Naive thymus-derived CD4-positive, alpha-beta T cell (primary cell): ENCODE measurements at regions of chr6 and their contacts with region 1.

Region 1: DNA sequence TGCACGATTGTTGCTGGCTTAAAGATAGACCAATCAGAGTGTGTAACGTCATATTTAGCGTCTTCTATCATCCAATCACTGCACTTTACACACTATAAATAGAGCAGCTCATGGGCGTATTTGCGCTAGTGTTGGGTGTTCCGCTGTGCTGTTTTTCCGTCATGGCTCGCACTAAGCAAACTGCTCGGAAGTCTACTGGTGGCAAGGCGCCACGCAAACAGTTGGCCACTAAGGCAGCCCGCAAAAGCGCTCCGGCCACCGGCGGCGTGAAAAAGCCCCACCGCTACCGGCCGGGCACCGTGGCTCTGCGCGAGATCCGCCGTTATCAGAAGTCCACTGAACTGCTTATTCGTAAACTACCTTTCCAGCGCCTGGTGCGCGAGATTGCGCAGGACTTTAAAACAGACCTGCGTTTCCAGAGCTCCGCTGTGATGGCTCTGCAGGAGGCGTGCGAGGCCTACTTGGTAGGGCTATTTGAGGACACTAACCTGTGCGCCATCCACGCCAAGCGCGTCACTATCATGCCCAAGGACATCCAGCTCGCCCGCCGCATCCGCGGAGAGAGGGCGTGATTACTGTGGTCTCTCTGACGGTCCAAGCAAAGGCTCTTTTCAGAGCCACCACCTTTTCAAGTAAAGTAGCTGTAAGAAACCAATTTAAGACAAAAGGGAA is 57.9 kb downstream of the TRIM38 start:
- DNase-seq: peak; percentile 68 to 94 (median 91)
- ATAC-seq: peak; percentile 66
- H3K4me3 ChIP-seq: peak overlapping the region; percentile 96
- H3K4me3 Mint-ChIP-seq: peak overlapping the region; percentile 82 to 100 (median 94)
- H3K27ac ChIP-seq: peak overlapping the region; percentile 97
- H3K27ac Mint-ChIP-seq: peak overlapping the region; percentile 95 to 100 (median 100)
- H3K4me1 ChIP-seq: peaks cover 0 to 10% of the 10 kb centered on the region in 2 donors
- H3K4me1 Mint-ChIP-seq: peaks cover 10 to 62% (median 45%) of the 10 kb centered on the region in 7 donors
- H3K27me3 ChIP-seq: no peaks in the 10 kb centered on the region
- H3K27me3 Mint-ChIP-seq: peaks cover 0 to 6% (median 0%) of the 10 kb centered on the region in 5 donors

Region 2: DNA sequence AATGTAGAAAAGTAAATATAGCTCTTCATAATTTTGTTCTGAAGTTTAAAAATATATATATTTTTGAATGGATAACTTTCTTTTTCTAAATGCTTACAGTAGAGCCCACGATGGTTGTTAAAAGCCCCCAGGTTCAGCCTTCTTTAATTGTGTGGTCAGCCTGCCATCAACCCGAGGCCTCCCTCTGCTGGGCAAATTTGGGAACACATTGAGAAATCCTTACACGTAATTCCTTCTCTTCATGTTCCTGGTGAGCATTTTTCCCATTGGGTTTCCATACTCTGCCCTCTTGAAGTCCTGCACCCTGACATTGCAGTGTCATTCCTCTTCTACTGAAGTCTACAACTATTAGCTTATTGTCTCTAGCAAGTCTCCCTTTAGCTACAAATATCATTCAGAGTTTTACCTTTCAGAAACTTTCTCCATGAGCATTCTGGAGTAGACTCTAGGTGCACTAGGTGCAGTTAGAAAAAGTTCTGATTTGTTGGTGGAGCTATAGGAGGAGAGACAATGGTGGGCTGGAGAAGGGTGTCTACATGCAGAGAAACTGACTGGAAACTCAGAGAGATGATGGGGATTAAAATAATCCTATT is 17.3 kb before region 1 on chr6:
- CTCF ChIA-PET with region 1: interaction called, 27 read pairs
- POLR2A ChIA-PET with region 1: interaction called, 166 read pairs
- intact Hi-C with region 1: loop called in 1 of 2 experiments (anchors 1 kb)
- DNase-seq: peak in 6 of 9 donors; percentile 34 to 44 (median 38)
- ATAC-seq: peak; percentile 63
- H3K4me3 ChIP-seq: no peak overlapping the region
- H3K4me3 Mint-ChIP-seq: no peak overlapping the region
- H3K27ac ChIP-seq: no peak overlapping the region
- H3K27ac Mint-ChIP-seq: no peak overlapping the region
- H3K4me1 ChIP-seq: no peaks in the 10 kb centered on the region
- H3K4me1 Mint-ChIP-seq: peaks cover 4 to 15% (median 10%) of the 10 kb centered on the region in 7 donors
- H3K27me3 ChIP-seq: no peaks in the 10 kb centered on the region
- H3K27me3 Mint-ChIP-seq: no peaks in the 10 kb centered on the region